ENCODE measurements at regions of chr7 and their contacts with region 1.

Region 1: DNA sequence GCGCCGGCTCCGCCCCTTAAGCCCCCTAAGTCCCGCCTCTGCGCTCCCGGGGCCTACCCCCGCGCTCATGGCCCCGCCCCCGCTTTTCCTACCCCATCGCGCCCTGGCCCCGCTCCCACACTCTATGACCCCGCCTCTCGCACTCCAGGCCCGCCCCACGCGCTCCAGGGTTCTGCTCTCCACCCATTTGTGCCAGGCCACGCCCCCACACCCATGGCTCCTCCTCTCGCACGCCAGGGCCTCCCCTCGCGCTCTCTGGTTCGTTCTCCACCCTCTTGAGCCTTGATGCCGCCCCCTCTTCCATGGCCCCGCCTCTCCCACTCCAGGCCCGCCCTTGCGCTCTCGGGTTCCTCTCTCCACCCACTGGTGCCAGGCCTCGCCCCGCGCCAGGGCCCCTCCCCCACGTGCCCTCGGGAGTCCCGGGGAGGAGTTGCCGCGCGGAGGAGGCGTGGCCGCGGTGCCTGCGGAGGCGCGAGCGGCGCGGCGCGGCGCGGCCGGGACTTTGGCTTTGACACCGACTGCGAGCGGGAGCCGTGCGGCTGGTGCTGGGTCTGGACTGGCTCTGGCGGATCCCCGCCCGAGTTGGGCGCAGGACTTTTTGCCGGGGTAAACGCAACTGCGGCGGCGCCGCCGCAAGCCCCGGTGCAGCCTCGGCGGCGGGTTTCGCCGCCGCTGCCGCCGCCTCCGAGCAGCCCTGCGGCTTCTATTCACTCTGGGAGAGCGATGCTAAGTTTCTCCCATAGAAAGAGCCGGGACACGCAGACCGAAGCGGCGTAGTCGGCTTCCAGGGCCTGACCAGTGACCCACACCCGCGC is at the start of gene EEPD1:
- DNase-seq: peak; percentile 100
- H3K4me3 ChIP-seq: peak within 1 kb of the TSS; percentile 73 to 92 (median 80)
- H3K27ac ChIP-seq: peak within 1 kb of the TSS; percentile 93 to 97 (median 95)
- H3K4me1 ChIP-seq: peaks cover 38 to 54% (median 49%) of the 10 kb centered on the region in 4 donors
- H3K27me3 ChIP-seq: no peaks in the 10 kb centered on the region
- CTCF ChIP-seq: peak in 1 of 3 experiments; percentile 7
- EP300 ChIP-seq: no peak
- POLR2A ChIP-seq: peak; percentile 59
- total RNA-seq, gene EEPD1: 18.7 to 27.9 (median 26.6) TPM

Region 2: DNA sequence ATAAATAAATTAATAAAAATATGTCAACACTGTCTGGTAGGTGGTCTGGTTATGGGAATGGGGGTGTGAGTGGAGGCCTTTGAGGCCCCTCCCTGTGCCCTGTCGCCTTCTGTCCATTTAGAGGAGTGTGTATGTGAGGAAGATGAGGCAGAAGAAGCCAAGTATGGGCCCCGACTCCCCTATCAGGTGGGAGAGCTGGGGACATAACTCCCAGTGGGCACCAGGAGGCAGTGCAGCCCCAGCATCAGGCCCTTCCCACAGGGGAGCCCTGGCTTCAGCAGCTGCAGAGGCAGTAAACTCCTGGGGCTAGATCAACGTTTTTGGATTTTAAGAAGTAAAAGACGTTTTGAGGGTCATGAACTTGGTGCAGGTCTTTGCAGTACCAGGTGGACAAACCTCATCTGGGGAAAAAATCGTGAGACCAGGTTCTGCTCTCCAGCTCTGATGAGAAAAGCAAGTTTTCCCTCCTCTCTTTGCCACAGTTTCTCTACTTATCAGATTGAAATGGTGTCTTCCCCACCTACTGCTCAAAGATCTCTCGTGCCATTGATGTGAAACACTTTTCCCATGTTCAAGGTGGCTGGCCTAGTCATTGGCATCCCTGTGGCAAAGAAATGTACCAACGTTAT is 167.7 kb before region 1 on chr7:
- intact Hi-C with region 1: loop called (anchors 10 kb)
- DNase-seq: no peak
- H3K4me3 ChIP-seq: no peak overlapping the region
- H3K27ac ChIP-seq: no peak overlapping the region
- H3K4me1 ChIP-seq: peaks cover 0 to 35% (median 24%) of the 10 kb centered on the region in 4 donors
- H3K27me3 ChIP-seq: no peaks in the 10 kb centered on the region
- CTCF ChIP-seq: peak; percentile 92 to 96 (median 94)
- EP300 ChIP-seq: no peak
- POLR2A ChIP-seq: no peak

Region 3: GRCh38 chr7:36207451-36208291 is 54.7 kb after region 1 on chr7:
- intact Hi-C with region 1: loop called (anchors 2 kb)
- DNase-seq: no peak
- H3K4me3 ChIP-seq: no peak overlapping the region
- H3K27ac ChIP-seq: peak overlapping the region; percentile 82 to 87 (median 84)
- H3K4me1 ChIP-seq: peaks cover 65 to 99% (median 94%) of the 10 kb centered on the region in 4 donors
- H3K27me3 ChIP-seq: no peaks in the 10 kb centered on the region
- CTCF ChIP-seq: peak in 1 of 3 experiments; percentile 29
- EP300 ChIP-seq: peak; percentile 76
- POLR2A ChIP-seq: no peak

Region 4: DNA sequence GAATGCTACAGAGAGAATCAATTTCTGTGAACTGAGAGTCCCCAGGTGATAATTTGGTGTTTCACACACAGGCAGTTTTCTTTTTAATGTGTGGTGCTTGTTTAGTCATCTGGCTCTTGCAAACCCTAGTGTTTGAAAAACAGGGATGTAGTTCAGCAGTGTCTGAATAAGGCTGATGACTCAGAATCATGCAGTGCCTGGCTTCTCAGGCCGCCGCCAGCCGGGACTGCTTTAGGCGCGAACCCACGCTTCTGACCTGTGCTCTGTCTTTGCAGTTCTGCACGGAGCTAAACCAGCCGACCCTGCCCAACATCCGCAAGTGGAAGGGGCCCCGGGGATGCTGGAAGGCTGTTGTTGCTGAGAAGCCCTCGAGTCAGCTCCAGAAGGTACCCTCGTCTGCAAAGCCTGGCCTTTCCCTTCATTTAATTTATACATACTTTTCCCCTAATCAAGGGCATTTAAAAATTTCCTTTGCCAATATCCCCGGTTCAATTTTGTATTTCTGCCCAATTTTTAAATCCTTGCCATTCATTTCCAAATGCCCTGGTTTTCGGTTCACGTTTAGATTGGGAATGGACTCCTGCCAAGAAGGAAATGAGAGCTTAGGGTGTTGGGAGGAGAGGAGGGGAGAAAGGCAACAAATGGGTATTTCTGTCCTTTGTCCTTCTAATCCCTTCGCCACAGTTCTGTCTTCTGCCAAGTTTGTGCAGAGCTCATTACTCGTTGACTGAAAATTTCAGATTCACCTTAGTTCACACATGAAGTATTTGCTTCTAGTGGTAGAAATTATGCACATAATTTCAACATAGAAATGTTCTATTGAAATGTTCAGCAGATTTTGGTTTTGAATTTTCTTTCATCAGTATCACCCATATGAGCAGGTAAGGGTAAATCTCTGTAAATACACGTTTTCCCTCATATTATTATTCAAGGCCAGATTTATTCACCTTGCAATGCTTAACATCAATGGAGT is 128.2 kb after region 1 on chr7:
- intact Hi-C with region 1: loop called (anchors 5 kb)
- DNase-seq: no peak
- H3K4me3 ChIP-seq: peak overlapping the region in 2 of 4 donors; percentile 23 to 37
- H3K27ac ChIP-seq: peak overlapping the region; percentile 61 to 77 (median 74)
- H3K4me1 ChIP-seq: peaks cover 49 to 89% (median 72%) of the 10 kb centered on the region in 4 donors
- H3K27me3 ChIP-seq: no peaks in the 10 kb centered on the region
- CTCF ChIP-seq: peak in 1 of 3 experiments; percentile 13
- EP300 ChIP-seq: no peak
- POLR2A ChIP-seq: no peak